GM10248 (cell line): ENCODE measurements at regions of chr5 and their contacts with region 1.

Region 1: DNA sequence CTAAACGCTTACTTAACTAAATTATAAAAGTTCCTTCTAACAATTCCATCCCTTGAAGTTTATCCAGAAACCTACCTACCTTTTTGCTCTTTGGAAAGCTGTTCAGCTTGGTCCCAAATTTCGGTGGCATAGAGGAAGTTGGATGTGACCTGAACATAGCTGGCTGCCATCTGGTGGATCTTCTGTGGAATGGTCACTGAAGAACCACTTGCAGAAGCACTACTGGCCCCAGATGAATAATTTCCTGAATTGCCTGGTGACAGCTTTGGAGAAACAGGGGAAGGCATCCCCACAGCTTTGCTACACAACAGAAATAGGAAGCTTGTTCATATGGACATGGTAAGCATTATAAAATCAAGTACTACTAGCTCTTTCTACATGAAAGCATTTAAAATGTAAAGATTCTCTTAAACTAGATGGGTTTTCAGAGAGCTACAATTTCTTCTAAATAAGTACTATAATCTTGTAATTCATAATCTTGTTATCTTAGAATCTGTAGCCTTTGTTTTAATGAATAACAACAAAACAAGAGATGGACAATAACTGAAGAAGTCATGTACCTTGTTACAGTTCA is 9.9 kb downstream of the LEAP2 start:
- DNase-seq: peak; percentile 39
- CTCF ChIP-seq: peak; percentile 60

Region 2: DNA sequence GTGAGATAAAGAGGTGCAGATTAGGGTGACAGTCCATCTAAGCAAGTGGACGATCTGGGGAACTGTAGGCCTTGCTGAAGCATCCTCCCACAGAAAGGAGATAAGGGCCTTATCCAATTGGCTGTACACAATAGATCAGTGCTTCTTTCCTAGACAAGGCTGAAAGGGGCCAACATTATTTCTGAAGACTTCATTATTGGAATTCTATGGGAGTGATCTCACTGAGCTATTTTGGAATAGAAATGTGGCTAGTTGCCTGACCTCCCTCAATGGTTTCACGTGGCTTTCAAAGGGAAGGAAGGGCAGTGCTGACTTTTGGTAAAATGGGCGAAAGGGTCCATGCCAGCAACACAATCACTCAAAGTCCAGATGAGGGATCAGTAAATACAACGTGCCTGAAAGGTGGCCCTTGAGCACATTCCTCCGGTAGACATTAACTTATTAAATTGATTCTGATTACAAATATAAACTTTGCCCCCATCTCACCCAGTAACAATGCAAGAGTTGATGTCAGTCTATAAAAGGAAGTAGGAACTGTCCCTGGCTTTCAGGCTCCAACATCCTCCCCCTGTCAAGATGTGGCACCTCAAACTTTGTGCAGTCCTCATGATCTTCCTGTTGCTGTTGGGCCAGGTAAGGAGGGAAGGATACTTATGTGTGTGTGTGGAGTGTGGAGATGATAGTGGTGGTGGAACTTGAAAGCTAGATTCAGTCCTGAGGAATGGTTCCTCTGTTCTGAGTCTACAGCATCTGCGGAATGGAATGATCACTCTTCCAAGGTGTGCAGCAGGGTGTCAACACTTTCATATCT is 10.0 kb before region 1 on chr5 and contains the start of gene LEAP2:
- CTCF ChIA-PET with region 1: interaction called, 72 read pairs
- POLR2A ChIA-PET with region 1: no interaction called
- DNase-seq: no peak
- CTCF ChIP-seq: no peak

Region 3: GRCh38 chr5:132988124-132988408 is 104.7 kb after region 1 on chr5:
- CTCF ChIA-PET with region 1: no interaction called
- POLR2A ChIA-PET with region 1: no interaction called
- DNase-seq: no peak
- CTCF ChIP-seq: no peak

Region 4: DNA sequence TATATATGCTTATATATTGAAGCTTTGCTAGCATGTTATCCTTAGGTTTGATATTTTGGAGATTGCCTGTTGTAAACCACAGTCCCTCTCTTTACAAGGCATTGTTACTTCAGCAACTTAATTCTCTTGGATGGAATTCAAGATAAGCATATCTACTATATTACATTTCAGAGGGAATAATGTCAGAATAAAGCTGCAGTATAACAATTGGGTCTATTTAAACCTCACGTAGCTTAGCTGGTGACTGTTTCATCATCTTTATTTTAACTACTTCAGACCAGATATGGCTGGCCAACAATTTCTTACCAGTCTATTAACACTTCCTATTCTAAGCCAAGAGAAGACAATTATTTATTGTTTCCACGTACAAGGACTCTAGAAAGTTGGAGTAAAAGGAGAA is 115.9 kb after region 1 on chr5:
- CTCF ChIA-PET with region 1: no interaction called
- POLR2A ChIA-PET with region 1: no interaction called
- DNase-seq: no peak
- CTCF ChIP-seq: no peak